ENCODE measurements at regions of chr15 and their contacts with region 1.

Region 1: DNA sequence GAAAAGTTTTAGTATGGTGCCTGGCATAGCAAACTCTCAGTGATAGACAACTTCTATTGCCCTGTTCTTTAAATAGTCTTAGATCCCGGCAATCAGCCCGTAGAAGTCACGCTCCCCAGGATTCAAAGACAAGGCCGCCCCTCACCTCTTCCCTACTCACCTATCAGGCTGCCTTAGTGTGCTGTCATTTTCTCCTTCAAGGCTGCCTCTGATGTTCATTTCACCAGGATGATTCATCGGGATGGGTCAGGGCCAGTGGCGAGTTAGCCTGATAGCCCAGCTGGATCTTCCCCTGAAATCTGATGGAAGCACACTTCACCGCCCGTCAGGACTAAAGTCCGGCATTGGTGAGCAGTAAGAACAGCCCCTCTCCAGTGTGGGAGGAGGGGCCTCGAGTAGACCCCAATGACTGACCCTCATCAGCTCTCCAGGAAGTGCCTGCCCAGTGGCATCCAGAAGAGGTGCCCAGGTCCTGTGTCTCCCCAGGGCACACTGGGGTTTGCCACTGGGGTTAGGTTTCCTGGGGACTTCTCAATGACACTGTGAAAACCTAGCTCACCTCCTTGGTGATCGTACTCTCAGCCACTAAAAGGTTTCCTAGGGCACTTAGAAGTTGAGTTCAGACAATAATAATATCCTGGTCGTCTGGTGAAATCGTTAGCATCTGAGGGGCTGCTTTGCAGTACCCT is 37.5 kb downstream of the TPM1 start:
- DNase-seq: no peak
- H3K4me3 ChIP-seq: no peak overlapping the region
- H3K4me3 Mint-ChIP-seq: no peak overlapping the region
- H3K27ac Mint-ChIP-seq: peak overlapping the region; percentile 98
- H3K4me1 ChIP-seq: peaks cover 40% of the 10 kb centered on the region
- H3K4me1 Mint-ChIP-seq: peaks cover 24% of the 10 kb centered on the region
- H3K27me3 ChIP-seq: no peaks in the 10 kb centered on the region
- H3K27me3 Mint-ChIP-seq: no peaks in the 10 kb centered on the region
- CTCF ChIP-seq: no peak

Region 2: GRCh38 chr15:63048115-63048775 is 31.8 kb before region 1 on chr15:
- CTCF ChIA-PET with region 1: interaction called, 17 read pairs
- POLR2A ChIA-PET with region 1: interaction called, 3 read pairs
- intact Hi-C with region 1: no loop called
- DNase-seq: peak; percentile 95 to 97
- H3K4me3 ChIP-seq: peak overlapping the region; percentile 81
- H3K4me3 Mint-ChIP-seq: peak overlapping the region; percentile 90
- H3K27ac Mint-ChIP-seq: peak overlapping the region; percentile 90
- H3K4me1 ChIP-seq: peaks cover 64% of the 10 kb centered on the region
- H3K4me1 Mint-ChIP-seq: peaks cover 61% of the 10 kb centered on the region
- H3K27me3 ChIP-seq: no peaks in the 10 kb centered on the region
- H3K27me3 Mint-ChIP-seq: no peaks in the 10 kb centered on the region
- CTCF ChIP-seq: peak; percentile 78 to 91

Region 3: DNA sequence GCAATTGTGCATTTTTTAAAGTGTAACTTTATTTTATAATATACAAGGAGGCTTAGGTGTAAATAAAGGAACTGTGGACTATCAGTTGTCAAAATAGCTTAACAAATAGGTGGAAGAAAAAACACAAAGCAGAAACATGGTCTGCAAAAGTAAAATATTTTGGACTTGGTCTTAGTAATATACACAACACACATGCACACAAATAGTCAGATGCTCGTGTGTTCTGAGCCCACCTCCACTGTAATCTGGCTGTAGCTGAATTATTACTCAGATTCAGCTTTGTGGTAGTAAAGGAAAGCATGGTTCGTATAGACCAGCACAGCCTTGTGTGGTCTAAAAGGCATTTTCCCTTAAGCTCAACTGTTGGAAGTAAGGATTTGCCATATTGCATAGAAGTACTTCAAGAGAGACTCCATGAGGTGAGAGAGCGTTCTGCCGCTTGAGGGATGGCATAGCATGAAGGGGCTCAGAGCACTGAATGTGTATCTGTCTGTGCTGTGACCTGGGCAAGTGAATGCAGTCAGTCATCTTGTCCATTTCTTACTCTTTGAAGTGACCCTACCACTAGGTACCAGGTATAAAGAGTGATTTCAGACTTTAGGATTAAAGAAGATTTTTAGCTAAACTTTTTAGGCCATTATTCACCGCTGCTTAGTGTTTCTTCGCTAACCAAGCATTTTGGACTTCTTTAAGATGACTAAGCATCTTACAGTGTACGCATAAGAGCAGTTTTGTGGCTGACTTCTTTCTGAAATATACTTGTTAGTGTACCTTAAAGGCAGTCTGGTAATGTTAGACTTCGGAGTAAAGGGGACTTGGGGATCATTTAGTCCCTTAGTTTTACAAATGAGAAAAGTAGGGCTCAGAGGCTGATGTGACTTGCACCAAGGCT is 22.4 kb before region 1 on chr15:
- CTCF ChIA-PET with region 1: no interaction called
- POLR2A ChIA-PET with region 1: interaction called, 10 read pairs
- intact Hi-C with region 1: no loop called
- DNase-seq: no peak
- H3K4me3 ChIP-seq: no peak overlapping the region
- H3K4me3 Mint-ChIP-seq: no peak overlapping the region
- H3K27ac Mint-ChIP-seq: no peak overlapping the region
- H3K4me1 ChIP-seq: peaks cover 23% of the 10 kb centered on the region
- H3K4me1 Mint-ChIP-seq: peaks cover 23% of the 10 kb centered on the region
- H3K27me3 ChIP-seq: no peaks in the 10 kb centered on the region
- H3K27me3 Mint-ChIP-seq: no peaks in the 10 kb centered on the region
- CTCF ChIP-seq: no peak

Region 4: DNA sequence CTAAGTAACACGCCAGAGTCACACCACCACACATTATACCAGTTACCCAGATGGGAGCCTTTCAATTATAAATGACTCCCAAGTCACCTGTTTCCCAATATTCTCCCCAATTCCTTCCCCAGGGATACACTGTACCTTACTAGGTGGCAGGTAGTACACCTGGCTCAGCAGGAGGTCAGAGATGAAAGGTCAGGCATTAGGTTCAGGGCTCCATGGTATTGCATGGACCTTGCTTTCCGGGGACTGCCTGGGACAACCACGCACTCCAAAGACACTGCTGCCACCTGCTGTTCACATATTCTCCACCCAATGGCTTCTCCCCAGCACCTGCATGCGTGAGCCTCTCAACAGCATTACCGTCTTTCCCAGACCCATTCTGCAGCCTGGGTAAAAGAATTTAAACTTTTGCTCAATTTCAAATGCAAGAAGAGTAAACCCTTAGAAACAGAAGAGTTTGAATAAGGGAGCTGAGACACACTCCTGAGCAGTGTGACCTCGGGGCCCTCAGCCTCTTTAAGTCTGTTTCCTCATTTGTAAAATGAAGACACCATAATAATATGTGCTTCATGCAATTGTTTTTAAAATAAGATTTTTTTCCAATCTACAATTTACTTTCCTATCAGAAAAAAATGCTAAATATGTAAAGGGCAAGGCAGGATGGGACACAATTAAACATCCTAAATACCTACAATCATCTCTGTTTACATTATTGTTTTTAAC is 13.6 kb after region 1 on chr15:
- CTCF ChIA-PET with region 1: no interaction called
- POLR2A ChIA-PET with region 1: no interaction called
- intact Hi-C with region 1: loop called (anchors 2 kb)
- DNase-seq: peak; percentile 86 to 88
- H3K4me3 ChIP-seq: no peak overlapping the region
- H3K4me3 Mint-ChIP-seq: no peak overlapping the region
- H3K27ac Mint-ChIP-seq: no peak overlapping the region
- H3K4me1 ChIP-seq: peaks cover 6% of the 10 kb centered on the region
- H3K4me1 Mint-ChIP-seq: peaks cover 15% of the 10 kb centered on the region
- H3K27me3 ChIP-seq: no peaks in the 10 kb centered on the region
- H3K27me3 Mint-ChIP-seq: no peaks in the 10 kb centered on the region
- CTCF ChIP-seq: peak; percentile 77 to 82

Region 5: GRCh38 chr15:63107895-63108546 is 27.9 kb after region 1 on chr15:
- CTCF ChIA-PET with region 1: no interaction called
- POLR2A ChIA-PET with region 1: no interaction called
- intact Hi-C with region 1: no loop called
- DNase-seq: no peak
- H3K4me3 ChIP-seq: no peak overlapping the region
- H3K4me3 Mint-ChIP-seq: no peak overlapping the region
- H3K27ac Mint-ChIP-seq: no peak overlapping the region
- H3K4me1 ChIP-seq: no peaks in the 10 kb centered on the region
- H3K4me1 Mint-ChIP-seq: no peaks in the 10 kb centered on the region
- H3K27me3 ChIP-seq: no peaks in the 10 kb centered on the region
- H3K27me3 Mint-ChIP-seq: no peaks in the 10 kb centered on the region
- CTCF ChIP-seq: no peak

Region 6: DNA sequence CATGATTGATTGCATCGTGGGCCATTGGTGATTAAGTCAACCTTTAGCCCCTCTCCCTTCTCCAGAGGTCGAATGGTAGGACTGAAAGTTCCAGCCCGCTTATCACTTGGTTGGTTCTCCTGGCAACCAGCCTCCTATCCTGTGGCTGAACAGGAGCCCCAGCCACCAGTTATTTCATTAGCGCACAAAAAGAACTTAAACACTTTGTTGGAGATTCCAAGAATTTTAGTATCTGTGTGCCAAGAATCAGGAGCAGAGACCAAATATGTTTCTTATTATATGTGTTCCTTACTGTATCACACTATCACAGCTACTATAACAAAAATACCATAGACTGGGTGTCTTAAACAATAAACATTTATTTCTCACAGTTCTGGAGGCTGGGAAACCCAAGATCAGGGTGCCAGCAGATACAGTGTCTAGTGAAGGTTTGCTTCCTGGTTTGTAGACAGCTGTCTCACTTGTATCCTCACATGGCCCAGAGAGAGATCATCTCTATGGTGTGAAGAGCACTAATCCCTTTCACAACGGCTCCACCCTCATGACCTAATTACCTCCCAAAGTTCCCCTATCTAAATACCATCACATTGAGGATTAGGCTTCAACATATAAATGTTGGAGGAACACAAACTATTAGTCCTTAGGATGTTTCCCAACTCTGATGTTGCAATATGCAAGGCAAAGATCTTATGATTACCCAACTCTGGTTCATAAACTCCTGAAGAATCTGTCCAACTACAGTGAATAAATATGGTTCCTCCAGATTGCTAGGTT is 166.8 kb after region 1 on chr15:
- CTCF ChIA-PET with region 1: no interaction called
- POLR2A ChIA-PET with region 1: no interaction called
- intact Hi-C with region 1: no loop called
- DNase-seq: peak in 1 of 2 experiments; percentile 36
- H3K4me3 ChIP-seq: no peak overlapping the region
- H3K4me3 Mint-ChIP-seq: no peak overlapping the region
- H3K27ac Mint-ChIP-seq: no peak overlapping the region
- H3K4me1 ChIP-seq: peaks cover 5% of the 10 kb centered on the region; the same call in 1 of the 2 replicates
- H3K4me1 Mint-ChIP-seq: no peaks in the 10 kb centered on the region
- H3K27me3 ChIP-seq: no peaks in the 10 kb centered on the region
- H3K27me3 Mint-ChIP-seq: no peaks in the 10 kb centered on the region
- CTCF ChIP-seq: no peak

Measured in Caco-2 (cell line).